ENCODE measurements at regions of chrX and their contacts with region 1.

Region 1: GRCh38 chrX:71365876-71366673 is at the start of gene TAF1:
- DNase-seq: peak; percentile 96 to 97
- H3K4me3 ChIP-seq: peak within 1 kb of the TSS; percentile 75 to 86
- H3K27ac ChIP-seq: peak within 1 kb of the TSS; percentile 89 to 93
- H3K4me1 ChIP-seq: peaks cover 0 to 19% (median 6%) of the 10 kb centered on the region in 4 donors
- H3K27me3 ChIP-seq: no peaks in the 10 kb centered on the region
- CTCF ChIP-seq: no peak

Region 2: DNA sequence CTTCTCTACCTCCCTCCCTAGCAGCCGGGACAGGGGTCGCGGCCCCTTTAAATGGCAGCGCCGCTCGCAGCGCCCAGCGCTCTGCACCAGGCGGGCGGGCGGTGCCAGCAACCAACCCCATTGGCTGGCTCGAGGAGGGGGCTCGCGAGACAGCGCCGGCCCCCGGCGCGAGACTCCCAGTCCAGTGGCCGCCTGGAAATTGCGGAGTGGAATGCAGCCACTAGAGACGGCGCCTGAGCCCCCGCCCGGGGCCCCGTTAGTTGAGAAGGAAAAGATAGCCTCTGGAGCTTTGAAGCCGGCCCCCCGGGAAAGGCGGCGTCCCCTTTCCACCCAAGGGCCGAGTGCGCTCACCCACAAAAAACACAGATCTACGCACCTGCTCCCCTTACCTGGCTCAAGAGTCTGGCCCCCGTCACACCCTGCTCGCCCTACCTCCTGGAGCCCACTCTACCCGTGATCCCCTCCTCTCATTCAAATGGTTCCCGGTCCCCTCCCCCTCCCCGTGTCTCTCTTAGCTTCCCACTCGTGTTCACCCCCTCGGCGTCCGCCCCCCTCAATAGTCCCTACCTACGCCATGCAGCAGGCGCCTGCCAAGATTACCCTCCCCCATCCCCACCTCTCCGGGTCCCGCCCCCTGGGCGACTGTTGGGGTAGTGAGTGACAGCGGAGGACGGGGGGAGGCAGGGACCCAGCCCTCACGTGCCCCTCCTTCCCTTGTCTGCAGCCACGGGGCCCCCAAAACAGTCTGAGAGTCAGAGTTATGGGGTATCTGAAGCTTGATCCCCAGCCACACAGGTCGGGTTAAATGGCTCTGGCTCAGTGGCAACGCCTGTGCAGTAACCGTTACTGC is 111.8 kb before region 1 on chrX and contains the start of gene ZMYM3:
- intact Hi-C with region 1: loop called (anchors 10 kb)
- DNase-seq: peak; percentile 84 to 92
- H3K4me3 ChIP-seq: peak within 1 kb of the TSS; percentile 70 to 77
- H3K27ac ChIP-seq: peak within 1 kb of the TSS; percentile 91 to 92
- H3K4me1 ChIP-seq: peaks cover 0 to 17% (median 9%) of the 10 kb centered on the region in 4 donors
- H3K27me3 ChIP-seq: no peaks in the 10 kb centered on the region
- CTCF ChIP-seq: no peak

Measured in tibial artery (tissue), 4 donors.